Natural killer cell (primary cell): ENCODE measurements at regions of chr1 and their contacts with region 1.

Region 1: GRCh38 chr1:151993654-151994496 is at the start of gene S100A10:
- DNase-seq: peak; percentile 64 to 90
- ATAC-seq: peak; percentile 67 to 85 (median 76)
- H3K4me3 ChIP-seq: peak within 1 kb of the TSS; percentile 96
- H3K4me3 Mint-ChIP-seq: peak within 1 kb of the TSS; percentile 95
- H3K27ac ChIP-seq: peak within 1 kb of the TSS; percentile 89
- H3K27ac Mint-ChIP-seq: peak within 1 kb of the TSS; percentile 84 to 96
- H3K4me1 ChIP-seq: peaks cover 36% of the 10 kb centered on the region
- H3K4me1 Mint-ChIP-seq: peaks cover 32 to 56% of the 10 kb centered on the region in 2 donors
- H3K27me3 ChIP-seq: no peaks in the 10 kb centered on the region
- H3K27me3 Mint-ChIP-seq: no peaks in the 10 kb centered on the region
- CTCF ChIP-seq: no peak
- total RNA-seq, gene S100A10: 142 to 200 (median 183) TPM

Region 2: DNA sequence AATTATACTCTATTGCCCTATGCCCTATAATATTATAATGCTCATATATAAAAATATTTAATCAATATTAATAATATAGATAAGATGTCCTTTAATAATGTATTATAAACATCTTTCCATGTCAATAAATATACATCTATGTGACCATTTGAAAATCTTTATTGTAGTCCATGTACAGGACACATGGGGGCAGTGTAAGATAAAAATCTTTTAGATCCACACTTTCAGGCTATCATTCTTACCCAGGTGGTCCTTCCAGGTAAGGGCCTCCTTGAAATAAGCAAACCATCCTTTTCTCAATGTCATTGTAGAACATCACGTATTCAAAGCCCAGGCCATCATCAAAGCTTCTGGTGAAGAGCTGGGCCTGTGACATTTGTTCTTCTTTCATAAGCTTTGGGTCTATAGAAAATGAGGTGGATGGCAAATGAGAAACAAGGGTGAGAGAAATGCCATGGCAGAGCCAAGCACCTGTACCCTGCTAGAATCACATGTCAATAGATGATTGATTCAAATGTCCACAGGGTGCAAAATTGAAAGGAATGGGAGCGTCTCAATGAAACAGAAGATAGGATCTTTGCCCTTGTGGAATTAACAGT is 104.8 kb before region 1 on chr1:
- intact Hi-C with region 1: loop called (anchors 1 kb)
- DNase-seq: peak in 1 of 2 donors; percentile 64
- ATAC-seq: no peak
- H3K4me3 ChIP-seq: no peak overlapping the region
- H3K4me3 Mint-ChIP-seq: no peak overlapping the region
- H3K27ac ChIP-seq: no peak overlapping the region
- H3K27ac Mint-ChIP-seq: no peak overlapping the region
- H3K4me1 ChIP-seq: no peaks in the 10 kb centered on the region
- H3K4me1 Mint-ChIP-seq: peaks cover 16 to 27% of the 10 kb centered on the region in 2 donors
- H3K27me3 ChIP-seq: no peaks in the 10 kb centered on the region
- H3K27me3 Mint-ChIP-seq: no peaks in the 10 kb centered on the region
- CTCF ChIP-seq: peak; percentile 59

Region 3: GRCh38 chr1:151934048-151934493 is 59.8 kb before region 1 on chr1:
- intact Hi-C with region 1: loop called (anchors 1 kb)
- DNase-seq: peak in 1 of 2 donors; percentile 84
- ATAC-seq: peak; percentile 84 to 98 (median 91)
- H3K4me3 ChIP-seq: no peak overlapping the region
- H3K4me3 Mint-ChIP-seq: no peak overlapping the region
- H3K27ac ChIP-seq: no peak overlapping the region
- H3K27ac Mint-ChIP-seq: peak overlapping the region in 1 of 2 donors; percentile 42
- H3K4me1 ChIP-seq: no peaks in the 10 kb centered on the region
- H3K4me1 Mint-ChIP-seq: peaks cover 0 to 5% of the 10 kb centered on the region in 2 donors
- H3K27me3 ChIP-seq: no peaks in the 10 kb centered on the region
- H3K27me3 Mint-ChIP-seq: peaks cover 8 to 9% of the 10 kb centered on the region in 2 donors
- CTCF ChIP-seq: peak; percentile 92

Region 4: DNA sequence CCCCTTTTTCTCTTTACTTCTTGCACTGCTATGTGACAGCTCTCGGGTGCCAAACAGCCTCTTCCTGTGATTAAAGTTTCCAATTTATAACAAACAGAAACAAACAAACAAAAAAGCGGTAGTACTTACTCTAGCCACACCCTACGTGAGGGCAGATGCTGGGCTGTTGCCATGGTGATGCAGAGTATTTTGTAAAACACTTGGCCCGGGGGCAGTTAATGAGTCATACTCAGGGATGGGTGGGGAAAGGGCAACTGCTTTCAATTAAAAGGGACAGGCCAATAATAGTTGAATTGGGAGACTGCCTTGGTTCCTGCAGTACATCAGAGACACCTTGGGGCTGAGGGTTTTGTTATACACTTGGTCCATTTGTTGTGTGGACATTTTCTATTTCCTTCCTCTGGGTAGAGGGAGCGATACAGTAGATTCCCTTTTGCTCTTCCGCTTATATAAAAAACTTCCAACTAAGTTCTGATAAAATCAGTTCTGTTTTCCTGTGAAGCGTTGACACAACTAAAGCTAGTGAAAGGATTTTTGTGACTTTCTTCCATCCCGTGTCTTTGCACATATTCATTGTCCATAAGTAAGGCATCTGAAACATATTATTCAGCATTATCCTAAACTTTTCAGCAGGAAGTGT is 48.0 kb before region 1 on chr1:
- intact Hi-C with region 1: loop called (anchors 2 kb)
- DNase-seq: peak; percentile 79 to 94
- ATAC-seq: peak; percentile 67 to 89 (median 87)
- H3K4me3 ChIP-seq: no peak overlapping the region
- H3K4me3 Mint-ChIP-seq: peak overlapping the region; percentile 86
- H3K27ac ChIP-seq: peak overlapping the region; percentile 93
- H3K27ac Mint-ChIP-seq: peak overlapping the region; percentile 89 to 95
- H3K4me1 ChIP-seq: peaks cover 22% of the 10 kb centered on the region
- H3K4me1 Mint-ChIP-seq: peaks cover 23 to 43% of the 10 kb centered on the region in 2 donors
- H3K27me3 ChIP-seq: no peaks in the 10 kb centered on the region
- H3K27me3 Mint-ChIP-seq: peaks cover 0 to 3% of the 10 kb centered on the region in 2 donors
- CTCF ChIP-seq: no peak

Region 5: GRCh38 chr1:151968058-151968457 is 25.8 kb before region 1 on chr1:
- intact Hi-C with region 1: loop called (anchors 1 kb)
- DNase-seq: peak in 1 of 2 donors; percentile 84
- ATAC-seq: peak; percentile 72 to 90 (median 89)
- H3K4me3 ChIP-seq: no peak overlapping the region
- H3K4me3 Mint-ChIP-seq: no peak overlapping the region
- H3K27ac ChIP-seq: no peak overlapping the region
- H3K27ac Mint-ChIP-seq: no peak overlapping the region
- H3K4me1 ChIP-seq: peaks cover 7% of the 10 kb centered on the region
- H3K4me1 Mint-ChIP-seq: peaks cover 0 to 6% of the 10 kb centered on the region in 2 donors
- H3K27me3 ChIP-seq: no peaks in the 10 kb centered on the region
- H3K27me3 Mint-ChIP-seq: peaks cover 5 to 13% of the 10 kb centered on the region in 2 donors
- CTCF ChIP-seq: peak; percentile 82